PC-9 (cell line): ENCODE measurements at regions of chr5 and their contacts with region 1.

Region 1: DNA sequence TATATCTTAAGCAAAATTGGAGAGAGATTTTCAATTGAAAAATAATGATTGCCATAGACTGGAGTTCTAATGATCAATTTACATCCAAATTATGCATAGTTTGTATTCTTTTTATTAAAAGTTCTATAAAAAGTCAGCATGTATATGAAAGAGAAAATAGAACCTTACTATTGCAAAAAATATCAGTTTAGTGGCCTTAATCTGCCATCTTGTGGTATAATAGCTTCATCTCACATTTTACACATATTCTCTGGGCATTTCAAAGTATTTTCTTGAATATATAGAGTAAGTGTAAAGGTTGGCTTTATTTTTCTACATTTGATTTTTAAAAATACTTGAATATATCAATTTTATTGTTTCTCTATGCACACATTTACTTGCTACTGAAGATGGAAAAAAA is 1858.6 kb upstream of the CDH9 start:
- DNase-seq: no peak
- H3K4me3 ChIP-seq: no peak overlapping the region
- H3K27ac ChIP-seq: no peak overlapping the region
- H3K4me1 ChIP-seq: no peaks in the 10 kb centered on the region
- H3K27me3 ChIP-seq: no peaks in the 10 kb centered on the region
- CTCF ChIP-seq: peak; percentile 56

Region 2: GRCh38 chr5:27020973-27021372 is 1876.0 kb before region 1 on chr5:
- CTCF ChIA-PET with region 1: no interaction called
- POLR2A ChIA-PET with region 1: no interaction called
- intact Hi-C with region 1: loop called (anchors 1 kb)
- DNase-seq: no peak
- H3K4me3 ChIP-seq: no peak overlapping the region
- H3K27ac ChIP-seq: no peak overlapping the region
- H3K4me1 ChIP-seq: no peaks in the 10 kb centered on the region
- H3K27me3 ChIP-seq: no peaks in the 10 kb centered on the region
- CTCF ChIP-seq: peak; percentile 51

Region 3: GRCh38 chr5:28473531-28474107 is 423.3 kb before region 1 on chr5:
- CTCF ChIA-PET with region 1: no interaction called
- POLR2A ChIA-PET with region 1: no interaction called
- intact Hi-C with region 1: loop called (anchors 10 kb)
- DNase-seq: no peak
- H3K4me3 ChIP-seq: no peak overlapping the region
- H3K27ac ChIP-seq: no peak overlapping the region
- H3K4me1 ChIP-seq: no peaks in the 10 kb centered on the region
- H3K27me3 ChIP-seq: no peaks in the 10 kb centered on the region
- CTCF ChIP-seq: peak; percentile 66